ENCODE measurements at regions of chr9 and their contacts with region 1.

Region 1: DNA sequence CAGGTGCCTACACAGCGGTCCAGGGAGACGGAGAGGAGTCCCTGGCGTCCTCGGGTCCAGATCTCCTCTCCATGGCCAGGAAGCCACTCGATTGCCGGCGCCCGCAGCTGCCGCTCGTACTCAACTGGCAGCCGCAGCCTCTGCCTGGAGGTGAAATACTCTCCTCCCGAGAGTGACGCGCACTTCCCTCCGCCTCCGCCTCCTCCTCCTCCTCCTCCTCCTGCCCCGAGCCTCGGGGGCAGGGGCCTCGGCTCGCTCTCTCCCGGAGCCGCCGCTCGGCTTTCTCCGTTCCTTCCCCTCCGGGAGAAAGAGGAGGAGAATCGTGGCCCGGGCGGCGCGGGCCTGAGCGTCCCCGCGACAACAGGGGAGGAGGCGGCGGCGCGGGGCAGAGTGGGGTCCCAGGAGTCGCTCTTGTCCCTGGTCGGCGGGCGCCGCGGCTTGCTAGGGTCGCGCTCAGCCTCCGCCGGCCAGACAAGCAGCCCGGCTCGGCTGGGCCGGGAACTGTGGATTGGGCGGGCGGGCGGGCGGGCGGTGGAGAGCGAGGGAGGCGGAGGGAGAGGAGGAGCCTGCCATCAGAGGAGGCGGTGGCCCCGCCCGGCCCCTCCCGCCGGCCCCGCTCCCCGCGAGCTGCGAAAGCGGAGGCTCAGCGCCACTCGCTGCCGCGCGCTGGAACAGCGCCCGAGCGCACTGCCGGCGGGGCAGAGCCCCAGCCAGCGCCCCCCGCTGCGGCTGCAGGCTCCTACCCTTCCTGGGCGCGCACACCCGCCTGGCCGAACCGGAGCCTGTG is at the start of gene CEMIP2:
- DNase-seq: peak; percentile 81
- ATAC-seq: peak; percentile 60
- H3K4me3 ChIP-seq: peak within 1 kb of the TSS; percentile 97
- H3K27ac ChIP-seq: peak within 1 kb of the TSS; percentile 66
- H3K4me1 ChIP-seq: peaks cover 43% of the 10 kb centered on the region
- H3K27me3 ChIP-seq: no peaks in the 10 kb centered on the region
- CTCF ChIP-seq: peak; percentile 21; the same call in 1 of the 2 replicates
- total RNA-seq, gene CEMIP2: 10.1 and 16.0 TPM in 2 replicates

Region 2: DNA sequence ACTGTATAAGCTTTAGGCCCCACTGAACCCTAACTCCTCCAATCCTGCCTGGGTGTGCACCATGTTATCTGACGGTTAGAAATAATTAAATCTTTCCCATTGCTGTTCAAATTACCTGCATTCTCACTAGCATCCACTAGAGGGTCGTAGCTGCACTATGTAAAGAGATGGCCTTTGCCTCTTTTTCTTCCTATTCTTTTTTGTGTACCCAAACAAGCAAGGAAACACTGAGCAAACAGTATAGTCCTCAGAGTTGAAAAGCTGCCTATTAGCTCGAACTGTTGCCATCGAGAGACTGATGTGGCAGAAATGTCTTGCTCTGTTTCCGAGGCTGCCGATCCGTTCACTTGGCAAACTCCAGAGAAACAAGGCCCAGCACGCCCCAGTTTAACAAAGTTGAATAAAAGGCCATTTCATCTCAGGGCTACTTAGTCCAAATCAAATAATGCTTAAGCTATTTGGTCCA is 483.4 kb before region 1 on chr9:
- CTCF ChIA-PET with region 1: no interaction called
- POLR2A ChIA-PET with region 1: no interaction called
- intact Hi-C with region 1: loop called (anchors 5 kb)
- DNase-seq: peak; percentile 72
- ATAC-seq: peak; percentile 71
- H3K4me3 ChIP-seq: no peak overlapping the region
- H3K27ac ChIP-seq: no peak overlapping the region
- H3K4me1 ChIP-seq: no peaks in the 10 kb centered on the region
- H3K27me3 ChIP-seq: no peaks in the 10 kb centered on the region
- CTCF ChIP-seq: peak; percentile 82

Region 3: DNA sequence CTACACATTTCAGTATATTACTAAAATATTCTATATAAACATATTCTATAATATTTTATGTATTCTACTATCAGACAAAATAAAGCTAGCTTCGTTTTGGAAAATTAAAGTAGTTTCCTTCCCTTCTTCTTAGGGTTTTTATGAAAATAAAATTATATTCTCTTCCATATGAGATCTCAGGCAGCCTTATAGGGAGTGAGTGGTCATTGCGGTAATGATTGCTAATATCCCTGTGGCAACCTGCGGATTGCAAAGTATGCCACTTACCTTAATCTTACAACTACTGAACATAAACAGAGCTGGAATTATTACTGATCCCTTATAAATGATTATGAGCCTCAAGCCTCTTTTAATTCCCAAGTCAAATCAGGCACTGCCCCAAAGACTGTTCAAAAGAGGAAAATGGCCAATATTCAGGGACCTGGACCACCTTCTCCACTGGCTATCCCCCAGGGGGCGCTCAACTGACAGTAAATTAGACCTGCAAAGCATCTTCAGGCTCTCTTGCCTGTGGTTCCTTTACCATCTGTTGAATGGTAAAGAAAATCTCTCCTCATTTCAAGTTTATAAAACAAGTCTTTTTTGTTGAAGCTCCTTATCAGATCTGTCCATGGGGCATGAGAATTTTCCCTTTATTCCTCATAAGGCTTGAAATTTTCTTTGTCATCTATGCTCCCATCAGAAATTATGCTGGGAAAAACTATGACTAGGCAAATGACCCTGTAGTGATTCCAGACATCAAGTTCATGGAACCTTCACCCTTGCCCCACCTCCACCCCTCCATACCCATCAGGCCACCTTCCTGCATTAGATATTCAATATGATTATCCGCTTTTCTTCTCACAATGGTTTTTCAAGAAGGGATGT is 164.2 kb before region 1 on chr9:
- CTCF ChIA-PET with region 1: no interaction called
- POLR2A ChIA-PET with region 1: no interaction called
- intact Hi-C with region 1: loop called (anchors 1 kb)
- DNase-seq: peak; percentile 66
- ATAC-seq: peak; percentile 74
- H3K4me3 ChIP-seq: no peak overlapping the region
- H3K27ac ChIP-seq: no peak overlapping the region
- H3K4me1 ChIP-seq: no peaks in the 10 kb centered on the region
- H3K27me3 ChIP-seq: no peaks in the 10 kb centered on the region
- CTCF ChIP-seq: peak; percentile 86

Region 4: GRCh38 chr9:71624728-71625127 is 143.9 kb before region 1 on chr9:
- CTCF ChIA-PET with region 1: no interaction called
- POLR2A ChIA-PET with region 1: no interaction called
- intact Hi-C with region 1: loop called (anchors 1 kb)
- DNase-seq: no peak
- ATAC-seq: no peak
- H3K4me3 ChIP-seq: no peak overlapping the region
- H3K27ac ChIP-seq: no peak overlapping the region
- H3K4me1 ChIP-seq: peaks cover 22% of the 10 kb centered on the region
- H3K27me3 ChIP-seq: no peaks in the 10 kb centered on the region
- CTCF ChIP-seq: peak; percentile 28; the same call in 1 of the 2 replicates

Region 5: DNA sequence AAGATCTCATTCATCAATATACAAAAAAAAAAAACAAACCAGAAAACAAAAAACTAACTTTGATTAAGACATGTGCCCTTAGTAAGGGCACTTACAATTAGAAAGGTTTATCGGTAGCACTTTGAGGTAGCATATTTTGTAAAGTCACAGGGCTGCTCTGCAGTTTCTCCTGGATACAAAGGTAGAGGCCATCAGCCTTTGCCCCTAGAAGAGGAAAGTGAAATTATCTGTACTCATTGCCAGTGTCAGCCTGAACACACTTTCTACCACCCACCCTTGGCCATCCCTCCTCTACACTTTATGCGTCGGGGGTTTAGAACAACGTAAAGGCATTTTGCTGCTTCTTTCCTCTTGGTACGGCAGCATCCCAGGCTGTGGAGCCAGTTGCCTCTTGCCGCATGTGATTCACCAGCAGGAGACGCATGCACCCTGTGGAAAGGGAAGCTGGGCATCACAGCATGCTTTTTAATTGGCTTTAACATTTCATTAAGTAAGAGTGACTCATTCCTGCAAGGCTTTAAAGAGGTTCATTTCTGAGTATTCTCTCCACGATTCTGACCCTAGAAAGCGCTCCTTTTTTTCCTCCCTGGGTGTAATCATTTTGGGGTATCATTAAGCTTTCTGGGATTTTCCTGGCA is 84.9 kb before region 1 on chr9:
- CTCF ChIA-PET with region 1: interaction called, 5 read pairs
- POLR2A ChIA-PET with region 1: interaction called, 11 read pairs
- intact Hi-C with region 1: loop called (anchors 2 kb)
- DNase-seq: peak; percentile 46
- ATAC-seq: peak; percentile 15; the same call in 1 of the 2 replicates
- H3K4me3 ChIP-seq: no peak overlapping the region
- H3K27ac ChIP-seq: no peak overlapping the region
- H3K4me1 ChIP-seq: peaks cover 69% of the 10 kb centered on the region
- H3K27me3 ChIP-seq: no peaks in the 10 kb centered on the region
- CTCF ChIP-seq: peak; percentile 47

Region 6: DNA sequence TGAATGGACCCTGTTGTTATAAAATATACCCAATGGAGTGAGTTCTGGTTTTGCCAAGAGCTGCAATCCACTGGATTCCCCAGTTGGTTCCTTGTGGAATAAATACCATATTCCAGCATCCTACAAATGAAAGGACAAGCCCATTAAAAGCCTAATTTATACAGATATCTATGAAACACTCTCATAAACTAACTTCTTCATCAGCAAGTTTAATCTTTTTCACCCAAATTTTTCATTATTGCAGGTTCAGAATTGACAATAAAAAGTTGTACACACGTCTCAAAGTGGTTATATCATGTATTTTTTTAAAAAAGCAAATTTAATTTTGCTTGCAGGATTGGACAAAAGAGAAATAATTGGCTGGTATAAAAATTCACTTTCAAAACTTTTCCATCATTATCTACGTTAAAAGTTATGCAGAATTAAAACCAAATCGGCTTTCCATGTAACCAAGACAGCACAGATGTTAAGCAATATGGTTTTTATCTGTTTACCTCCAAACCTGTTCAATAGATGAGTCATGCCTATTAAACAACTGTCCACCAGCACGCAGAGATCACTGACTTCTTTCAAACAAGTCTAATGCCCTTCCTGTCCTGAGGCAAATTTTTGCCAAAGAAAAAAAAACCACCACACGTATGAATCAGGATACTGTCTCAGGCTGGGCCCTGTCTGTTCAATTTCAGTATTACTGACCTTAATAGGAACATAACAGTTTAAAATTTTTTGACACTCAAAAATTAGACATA is 42.8 kb before region 1 on chr9:
- CTCF ChIA-PET with region 1: no interaction called
- POLR2A ChIA-PET with region 1: no interaction called
- intact Hi-C with region 1: loop called (anchors 2 kb)
- DNase-seq: peak; percentile 92
- ATAC-seq: peak; percentile 87
- H3K4me3 ChIP-seq: no peak overlapping the region
- H3K27ac ChIP-seq: peak overlapping the region; percentile 46; the same call in 1 of the 2 replicates
- H3K4me1 ChIP-seq: peaks cover 33% of the 10 kb centered on the region
- H3K27me3 ChIP-seq: no peaks in the 10 kb centered on the region
- CTCF ChIP-seq: no peak

Region 7: DNA sequence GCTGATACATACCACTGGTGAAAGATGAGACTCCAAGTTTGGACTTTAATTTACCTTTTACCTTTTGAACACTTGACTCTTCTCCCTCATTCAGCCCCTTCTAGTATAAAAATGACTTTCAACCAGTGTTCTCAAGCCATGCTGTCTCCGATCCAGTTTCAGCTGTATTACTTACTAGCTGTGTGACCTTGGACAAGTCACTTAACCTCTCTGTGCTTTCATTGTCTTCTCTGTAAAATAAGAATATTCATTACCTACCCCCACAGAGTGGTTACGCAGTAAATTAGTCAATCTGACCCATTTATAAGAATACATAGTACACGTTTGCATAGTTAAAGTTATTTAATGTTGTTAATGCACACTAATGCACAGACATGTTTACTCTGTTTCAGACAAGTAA is 12.4 kb after region 1 on chr9:
- CTCF ChIA-PET with region 1: interaction called, 8 read pairs
- POLR2A ChIA-PET with region 1: interaction called, 11 read pairs
- intact Hi-C with region 1: no loop called
- DNase-seq: peak; percentile 5
- ATAC-seq: peak; percentile 23; the same call in 1 of the 2 replicates
- H3K4me3 ChIP-seq: no peak overlapping the region
- H3K27ac ChIP-seq: no peak overlapping the region
- H3K4me1 ChIP-seq: peaks cover 22% of the 10 kb centered on the region
- H3K27me3 ChIP-seq: no peaks in the 10 kb centered on the region
- CTCF ChIP-seq: no peak

Region 8: DNA sequence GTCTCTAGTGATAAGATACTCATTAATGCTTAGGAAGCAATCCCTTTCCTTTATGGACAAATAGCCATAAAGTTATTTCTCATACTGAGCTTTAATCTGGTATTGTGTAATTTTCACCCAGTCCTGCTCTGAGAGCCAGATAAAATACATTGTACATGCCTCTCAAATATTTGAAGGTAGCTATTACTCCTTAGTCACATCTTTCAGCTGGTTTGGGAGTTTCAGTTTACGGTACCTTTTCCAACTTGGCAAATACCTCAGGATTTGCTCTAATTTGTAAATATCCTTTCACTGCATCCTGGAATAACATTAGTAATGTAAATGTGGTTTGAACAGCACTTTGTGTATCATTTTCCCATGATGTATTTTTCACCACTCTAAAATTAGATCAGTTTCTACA is 95.0 kb after region 1 on chr9:
- CTCF ChIA-PET with region 1: no interaction called
- POLR2A ChIA-PET with region 1: no interaction called
- intact Hi-C with region 1: no loop called
- DNase-seq: no peak
- ATAC-seq: no peak
- H3K4me3 ChIP-seq: no peak overlapping the region
- H3K27ac ChIP-seq: no peak overlapping the region
- H3K4me1 ChIP-seq: no peaks in the 10 kb centered on the region
- H3K27me3 ChIP-seq: no peaks in the 10 kb centered on the region
- CTCF ChIP-seq: no peak

Measured in PC-3 (cell line).